ENCODE measurements at regions of chr1 and their contacts with region 1.

Region 1: DNA sequence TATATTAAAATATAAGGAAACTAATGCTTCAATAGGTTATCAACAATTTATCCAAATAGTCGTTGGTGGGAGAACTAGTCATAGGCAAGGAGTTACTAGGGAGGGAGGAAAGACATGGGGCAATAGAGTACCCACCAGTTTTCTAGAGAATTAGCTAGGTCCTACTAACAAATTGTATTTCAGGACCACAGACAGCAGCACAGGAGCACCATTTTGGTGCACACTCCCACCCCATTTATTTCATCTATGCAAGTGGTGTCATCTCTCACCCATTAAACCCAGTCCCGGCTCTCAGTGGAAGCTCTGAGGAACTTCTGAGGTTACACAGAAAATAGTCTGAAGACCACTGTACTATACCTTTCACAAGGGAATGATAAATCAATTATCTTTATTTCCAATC is 89.0 kb upstream of the BCAR3 start:
- DNase-seq: peak; percentile 40
- H3K4me3 ChIP-seq: no peak overlapping the region
- H3K27ac ChIP-seq: no peak overlapping the region
- H3K4me1 ChIP-seq: peaks cover 11% of the 10 kb centered on the region; the same call in 1 of the 2 replicates
- H3K27me3 ChIP-seq: no peaks in the 10 kb centered on the region

Region 2: DNA sequence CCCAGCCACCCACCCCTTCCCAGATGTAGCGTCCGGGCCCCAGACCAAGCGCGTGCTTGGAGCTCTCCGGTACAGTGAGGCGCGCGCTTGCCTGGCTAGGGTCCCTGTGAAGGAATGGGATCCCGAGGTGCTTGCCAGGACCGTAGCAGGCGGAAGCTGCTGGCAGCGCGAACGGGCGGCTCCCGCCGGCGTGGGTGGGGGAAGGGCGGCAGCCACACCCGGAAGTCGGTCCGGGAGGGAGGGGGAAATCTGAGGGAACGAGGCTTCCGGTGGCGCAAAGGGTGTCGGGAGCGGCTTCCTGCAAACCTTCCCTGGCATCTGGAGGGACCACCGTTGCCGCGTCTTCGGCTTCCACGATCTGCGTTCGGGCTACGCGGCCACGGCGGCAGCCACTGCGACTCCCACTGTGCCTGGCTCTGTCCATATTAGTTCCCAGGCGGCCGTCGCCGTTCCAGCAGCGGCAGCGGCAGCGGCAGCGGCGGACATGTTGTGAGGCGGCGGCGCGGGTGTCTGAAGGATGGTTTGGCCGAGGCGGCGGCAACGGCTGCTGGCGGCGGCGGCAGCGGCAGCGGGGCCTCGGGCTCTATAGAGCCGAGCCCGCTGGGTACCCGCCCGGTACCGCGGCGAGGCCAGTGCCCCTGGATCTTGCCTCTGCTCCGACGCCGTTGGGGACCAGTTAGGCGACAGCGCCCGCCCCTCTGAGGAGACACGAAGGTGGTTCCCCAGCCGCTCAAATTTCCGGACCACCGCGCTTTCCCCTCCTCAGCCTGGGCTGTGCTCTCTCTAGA is 424.8 kb before region 1 on chr1 and contains the start of gene DR1:
- in situ Hi-C with region 1: no loop called
- DNase-seq: peak; percentile 96
- H3K4me3 ChIP-seq: peak within 1 kb of the TSS; percentile 99
- H3K27ac ChIP-seq: peak within 1 kb of the TSS; percentile 96
- H3K4me1 ChIP-seq: peaks cover 26% of the 10 kb centered on the region
- H3K27me3 ChIP-seq: no peaks in the 10 kb centered on the region
- total RNA-seq, gene DR1: 49.2 and 68.8 TPM in 2 replicates

Region 3: DNA sequence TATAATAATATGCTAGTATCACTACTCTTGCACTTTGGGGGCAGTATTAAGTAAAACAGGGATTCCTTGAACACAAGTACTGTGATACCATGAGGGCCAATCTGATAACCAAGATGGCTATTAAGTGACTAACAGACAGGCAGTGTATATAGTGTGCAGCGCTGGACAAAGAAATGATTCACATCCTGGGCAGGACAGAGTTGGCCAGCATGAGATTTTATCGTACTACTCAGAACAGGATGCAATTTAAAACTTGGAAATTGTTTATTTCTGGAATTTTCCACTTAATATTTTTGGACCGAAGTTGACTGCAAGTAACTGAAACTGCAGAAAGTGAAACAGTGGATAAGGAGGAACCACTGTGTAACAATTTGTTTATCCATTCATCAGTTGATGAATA is 33.8 kb after region 1 on chr1:
- in situ Hi-C with region 1: loop called (anchors 5 kb)
- DNase-seq: peak; percentile 94
- H3K4me3 ChIP-seq: peak overlapping the region; percentile 64
- H3K27ac ChIP-seq: peak overlapping the region; percentile 74
- H3K4me1 ChIP-seq: peaks cover 43% of the 10 kb centered on the region
- H3K27me3 ChIP-seq: no peaks in the 10 kb centered on the region

Measured in GM23248 (cell line).